PC-3 (cell line): ENCODE measurements at regions of chr3 and their contacts with region 1.

Region 1: GRCh38 chr3:125437631-125438435 is 62.7 kb upstream of the ZNF148 start:
- DNase-seq: peak; percentile 61
- ATAC-seq: peak; percentile 27; the same call in 1 of the 2 replicates
- H3K4me3 ChIP-seq: no peak overlapping the region
- H3K27ac ChIP-seq: no peak overlapping the region
- H3K4me1 ChIP-seq: peaks cover 14% of the 10 kb centered on the region
- H3K27me3 ChIP-seq: no peaks in the 10 kb centered on the region
- CTCF ChIP-seq: peak; percentile 89

Region 2: DNA sequence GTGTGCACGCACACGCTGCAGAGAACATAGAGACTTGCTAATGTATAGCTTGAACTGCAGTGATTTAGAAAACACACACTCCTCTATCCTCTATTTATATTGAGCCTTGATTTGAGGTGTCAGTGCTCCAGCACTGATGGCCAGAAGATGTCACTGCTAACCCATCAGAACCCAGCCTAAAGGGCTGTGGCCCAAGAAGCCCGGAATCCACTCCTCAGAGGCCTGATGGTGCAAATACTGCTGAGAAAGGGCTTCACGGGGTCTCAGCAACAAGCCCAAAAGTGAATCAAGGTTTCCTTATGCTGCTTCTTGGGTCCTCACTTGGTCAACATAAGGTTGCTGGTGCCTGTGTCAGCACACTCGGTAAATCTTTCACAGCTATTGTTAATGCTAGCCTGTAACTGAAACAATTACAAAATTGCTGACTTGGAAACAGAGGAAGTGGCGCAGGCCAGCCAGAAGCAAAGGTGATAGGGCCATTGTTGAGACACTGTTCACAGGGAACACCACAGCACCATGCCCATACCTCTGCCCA is 442.3 kb before region 1 on chr3:
- CTCF ChIA-PET with region 1: interaction called, 3 read pairs
- POLR2A ChIA-PET with region 1: no interaction called
- intact Hi-C with region 1: loop called (anchors 1 kb)
- DNase-seq: peak; percentile 75
- ATAC-seq: peak; percentile 98
- H3K4me3 ChIP-seq: no peak overlapping the region
- H3K27ac ChIP-seq: no peak overlapping the region
- H3K4me1 ChIP-seq: peaks cover 8% of the 10 kb centered on the region; the same call in 1 of the 2 replicates
- H3K27me3 ChIP-seq: no peaks in the 10 kb centered on the region
- CTCF ChIP-seq: peak; percentile 83

Region 3: GRCh38 chr3:125250973-125251372 is 186.9 kb before region 1 on chr3:
- CTCF ChIA-PET with region 1: no interaction called
- POLR2A ChIA-PET with region 1: no interaction called
- intact Hi-C with region 1: no loop called
- DNase-seq: no peak
- ATAC-seq: no peak
- H3K4me3 ChIP-seq: no peak overlapping the region
- H3K27ac ChIP-seq: no peak overlapping the region
- H3K4me1 ChIP-seq: no peaks in the 10 kb centered on the region
- H3K27me3 ChIP-seq: no peaks in the 10 kb centered on the region
- CTCF ChIP-seq: no peak